ENCODE measurements at regions of chrX and their contacts with region 1.

Region 1: DNA sequence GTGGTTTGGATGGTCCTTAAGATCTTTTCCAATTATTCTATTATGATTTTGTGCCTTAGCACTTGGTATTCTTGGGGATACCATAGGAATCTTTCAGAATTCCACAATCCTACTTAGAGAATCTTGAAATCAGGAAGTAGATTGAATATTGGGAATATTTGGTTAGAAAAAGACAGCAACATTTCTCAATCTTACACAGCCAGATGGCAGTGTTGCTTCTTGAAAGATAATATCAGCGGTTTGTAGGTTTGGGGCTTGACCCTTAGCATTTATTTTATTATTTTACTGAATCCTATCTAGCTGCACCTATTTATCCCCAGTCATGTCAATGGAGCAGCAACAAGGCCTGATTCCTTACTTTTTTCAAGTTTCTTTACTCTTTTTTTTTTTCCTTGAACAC is 28.6 kb downstream of the MAGEB1 start:
- DNase-seq: no peak
- ATAC-seq: no peak
- H3K4me3 ChIP-seq: no peak overlapping the region
- H3K27ac ChIP-seq: no peak overlapping the region
- H3K4me1 ChIP-seq: no peaks in the 10 kb centered on the region
- H3K27me3 ChIP-seq: no peaks in the 10 kb centered on the region
- CTCF ChIP-seq: peak; percentile 6; the same call in 1 of the 2 replicates

Region 2: GRCh38 chrX:30504309-30504708 is 228.8 kb after region 1 on chrX:
- CTCF ChIA-PET with region 1: no interaction called
- POLR2A ChIA-PET with region 1: no interaction called
- in situ Hi-C with region 1: no loop called
- intact Hi-C with region 1: loop called (anchors 2 kb)
- DNase-seq: no peak
- ATAC-seq: no peak
- H3K4me3 ChIP-seq: no peak overlapping the region
- H3K27ac ChIP-seq: no peak overlapping the region
- H3K4me1 ChIP-seq: no peaks in the 10 kb centered on the region
- H3K27me3 ChIP-seq: no peaks in the 10 kb centered on the region
- CTCF ChIP-seq: peak; percentile 45; the same call in 1 of the 2 replicates

Measured in Panc1 (cell line).